Activated B cell treated with CpG ODN at 0.5 μM for 24 hours (primary cell): ENCODE measurements at regions of chr11 and their contacts with region 1.

Region 1: DNA sequence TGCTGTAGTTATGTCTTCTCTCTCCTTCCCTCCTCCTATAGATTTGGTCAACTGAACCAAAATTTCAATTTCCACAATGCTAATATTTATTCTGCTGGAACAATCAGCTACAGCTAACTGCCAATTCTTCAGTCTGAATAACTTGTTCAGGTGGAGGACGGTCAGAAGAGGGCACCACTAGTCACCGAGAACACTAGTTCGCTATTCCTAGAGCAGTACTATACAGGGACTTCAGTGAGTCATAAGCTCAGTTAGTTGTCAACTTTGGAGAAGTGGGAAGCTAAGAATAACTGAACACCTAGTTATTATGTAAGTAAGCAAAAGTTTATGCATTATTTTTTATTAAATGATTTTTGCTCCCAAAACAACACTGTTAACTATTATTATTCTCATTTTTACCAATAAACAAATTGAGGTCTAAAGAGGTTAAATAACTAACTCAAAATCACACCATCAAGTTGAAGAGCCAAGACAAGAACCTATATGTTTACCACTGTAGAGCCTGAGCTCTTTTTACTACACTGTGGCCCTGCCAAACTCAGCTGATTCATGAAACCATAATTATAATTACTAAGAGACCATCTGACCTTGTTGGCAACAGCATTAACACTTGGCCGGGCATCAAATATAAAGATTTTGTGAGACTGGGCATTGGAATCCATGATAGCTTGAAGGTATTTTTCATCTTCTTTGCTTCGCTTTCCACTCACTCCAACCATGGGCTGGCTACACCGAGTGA is 59.0 kb downstream of the CEP57 start:
- DNase-seq: no peak
- ATAC-seq: peak; percentile 52
- H3K4me3 Mint-ChIP-seq: no peak overlapping the region
- H3K27ac Mint-ChIP-seq: no peak overlapping the region
- H3K4me1 Mint-ChIP-seq: no peaks in the 10 kb centered on the region
- H3K27me3 Mint-ChIP-seq: no peaks in the 10 kb centered on the region
- CTCF ChIP-seq: no peak

Region 2: GRCh38 chr11:95835768-95836488 is 13.3 kb before region 1 on chr11:
- CTCF ChIA-PET with region 1: interaction called, 10 read pairs
- POLR2A ChIA-PET with region 1: no interaction called
- intact Hi-C with region 1: no loop called
- DNase-seq: no peak
- ATAC-seq: peak; percentile 87
- H3K4me3 Mint-ChIP-seq: no peak overlapping the region
- H3K27ac Mint-ChIP-seq: no peak overlapping the region
- H3K4me1 Mint-ChIP-seq: peaks cover 2% of the 10 kb centered on the region
- H3K27me3 Mint-ChIP-seq: no peaks in the 10 kb centered on the region
- CTCF ChIP-seq: no peak

Region 3: GRCh38 chr11:95923728-95924413 is 74.6 kb after region 1 on chr11 and contains the start of gene MTMR2:
- CTCF ChIA-PET with region 1: no interaction called
- POLR2A ChIA-PET with region 1: no interaction called
- intact Hi-C with region 1: no loop called
- DNase-seq: peak; percentile 60
- ATAC-seq: peak; percentile 98
- H3K4me3 Mint-ChIP-seq: peak within 1 kb of the TSS; percentile 100
- H3K27ac Mint-ChIP-seq: peak within 1 kb of the TSS; percentile 98
- H3K4me1 Mint-ChIP-seq: peaks cover 29% of the 10 kb centered on the region
- H3K27me3 Mint-ChIP-seq: peaks cover 9% of the 10 kb centered on the region
- CTCF ChIP-seq: no peak
- total RNA-seq, gene MTMR2: 22.6 and 25.1 TPM in 2 replicates